Left cardiac atrium (tissue), 4 donors: ENCODE measurements at regions of chr3 and their contacts with region 1.

Region 1: DNA sequence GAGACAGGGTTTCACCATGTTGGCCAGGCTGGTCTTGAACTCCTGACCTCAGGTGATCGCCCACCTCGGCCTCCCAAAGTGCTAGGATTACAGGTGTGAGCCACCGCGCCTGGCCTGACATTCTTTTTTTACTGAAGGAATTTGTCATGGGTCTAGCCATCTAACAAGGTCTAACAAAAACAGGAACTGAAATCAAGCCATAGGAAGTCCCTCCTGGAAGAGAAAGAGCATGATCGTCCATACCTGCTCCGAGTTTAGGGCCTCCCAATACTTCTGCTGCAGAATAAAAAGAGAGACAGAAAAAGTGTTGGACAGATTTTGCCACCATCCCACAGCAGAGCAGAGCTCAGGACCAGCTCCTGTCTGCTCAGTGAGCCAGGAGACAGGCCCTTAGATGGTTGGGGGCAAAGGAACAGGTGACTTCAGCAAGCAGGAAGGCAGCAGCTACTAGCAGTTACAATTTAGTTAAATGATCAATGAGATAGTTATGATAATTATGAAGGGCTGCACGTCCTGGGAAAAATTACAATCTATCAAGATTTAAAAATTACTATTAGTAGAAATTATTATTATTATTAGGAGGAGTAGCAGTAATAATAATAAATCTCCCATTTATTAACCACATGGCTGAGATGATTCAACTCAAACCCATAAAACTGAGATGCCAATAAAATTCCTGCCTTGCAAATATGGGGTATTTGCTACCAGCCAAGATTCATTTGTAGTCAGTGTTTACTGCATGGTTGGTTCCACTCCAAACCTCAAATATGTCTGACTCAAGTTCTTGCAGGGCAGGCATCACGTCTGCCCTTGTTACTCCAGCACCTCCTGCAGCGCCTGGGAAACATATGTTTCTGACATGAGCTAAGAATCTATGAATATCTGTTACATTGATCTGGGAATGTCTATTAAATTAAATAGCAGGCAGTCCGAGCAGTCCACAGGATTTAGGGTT is 40.1 kb downstream of the TMEM44 start:
- DNase-seq: no peak
- ATAC-seq: peak; percentile 66 to 85

Region 2: DNA sequence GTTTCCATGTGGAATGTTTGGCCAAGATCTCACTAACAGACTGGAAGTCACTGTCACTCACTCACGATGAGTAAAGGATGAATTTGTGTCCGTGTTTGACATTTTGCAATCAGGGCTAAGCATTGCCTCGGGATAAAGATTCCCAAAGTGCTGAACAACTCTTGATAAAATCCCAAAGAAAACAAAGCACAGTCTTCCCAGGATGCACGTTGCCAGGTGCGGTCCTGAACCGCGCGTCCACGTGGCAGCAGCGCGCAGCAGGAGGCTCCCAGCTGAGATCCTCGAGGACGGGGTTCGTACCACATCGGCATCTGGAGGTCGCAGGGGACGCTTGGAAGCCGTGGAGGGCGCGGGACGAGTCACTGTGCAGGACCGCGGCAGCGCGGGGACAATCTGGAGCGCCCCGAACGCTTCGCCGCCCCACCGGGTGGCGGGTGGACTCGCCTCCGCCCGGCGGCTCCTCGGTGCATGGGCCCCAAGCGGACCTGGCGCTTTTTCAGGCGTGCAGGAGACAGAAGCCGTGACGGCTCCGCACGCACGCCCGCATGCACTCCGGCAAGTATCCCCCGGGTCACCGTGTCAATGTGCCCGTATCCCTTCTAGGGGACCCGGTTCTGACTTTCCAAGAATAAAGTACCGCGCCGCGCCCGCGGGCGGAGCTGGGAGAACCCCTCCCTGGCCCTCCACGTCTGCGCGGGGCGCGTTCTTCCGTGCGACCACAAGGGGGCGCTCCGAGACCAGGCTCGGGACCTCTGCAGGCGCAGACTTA is 259.7 kb before region 1 on chr3:
- intact Hi-C with region 1: loop called in 1 of 2 experiments (anchors 10 kb)
- DNase-seq: peak; percentile 89
- ATAC-seq: peak; percentile 83 to 93